ENCODE measurements at regions of chr10 and their contacts with region 1.

Region 1: DNA sequence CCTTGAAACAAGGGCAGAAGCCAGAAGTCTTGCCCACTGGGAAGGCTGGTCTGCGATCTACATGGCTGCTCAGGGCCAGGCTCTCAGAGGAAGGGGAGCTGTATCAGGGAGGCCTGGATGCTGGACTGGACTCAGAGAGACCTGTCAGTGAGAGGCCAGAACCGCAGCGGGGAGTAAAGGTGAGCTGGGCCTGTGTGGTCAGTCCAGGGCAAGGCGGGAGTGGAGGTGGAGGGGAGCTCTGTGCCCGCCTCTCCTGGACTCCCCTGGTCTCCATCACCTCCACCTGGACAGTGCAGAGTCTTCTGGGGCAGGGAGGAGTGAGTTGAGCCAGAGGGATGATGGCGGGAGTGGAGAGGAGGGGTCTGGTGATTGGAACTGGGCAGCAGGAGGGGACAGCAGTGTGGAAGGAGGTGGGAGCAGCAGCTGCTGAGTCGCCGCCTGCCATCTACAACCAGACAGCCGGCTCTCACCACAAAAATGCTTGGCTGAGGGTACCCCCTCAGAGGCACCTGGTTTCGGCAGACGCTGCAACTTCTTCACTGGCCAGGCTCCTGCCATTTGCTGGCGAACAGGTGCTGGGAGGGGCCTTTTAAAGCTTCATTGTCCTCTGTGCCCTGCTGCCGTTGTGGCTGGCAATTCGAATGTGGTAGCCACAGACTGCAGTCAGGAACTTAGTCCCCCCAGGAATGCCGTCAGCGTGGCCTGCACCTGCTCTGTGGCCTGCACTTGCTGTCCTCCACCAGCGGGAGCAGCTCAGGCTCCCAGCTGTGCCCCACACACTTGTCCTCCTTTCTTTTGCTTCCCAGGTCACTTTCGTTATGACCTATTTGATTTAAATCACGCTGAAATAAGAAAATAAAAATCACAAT is 3.5 kb downstream of the RASSF4 start:
- DNase-seq: no peak

Region 2: GRCh38 chr10:44947371-44948152 is 15.5 kb before region 1 on chr10:
- intact Hi-C with region 1: loop called in 1 of 2 experiments (anchors 1 kb)
- DNase-seq: no peak

Measured in posterior vena cava (tissue), 2 donors.